Brain microvascular endothelial cell (primary cell): ENCODE measurements at regions of chr1 and their contacts with region 1.

Region 1: GRCh38 chr1:109655601-109656519 is at the start of gene GSTM4:
- DNase-seq: peak; percentile 67
- H3K4me3 ChIP-seq: peak within 1 kb of the TSS; percentile 76
- H3K27ac ChIP-seq: no peak within 1 kb of the TSS
- H3K27me3 ChIP-seq: no peaks in the 10 kb centered on the region
- CTCF ChIP-seq: peak; percentile 29

Region 2: DNA sequence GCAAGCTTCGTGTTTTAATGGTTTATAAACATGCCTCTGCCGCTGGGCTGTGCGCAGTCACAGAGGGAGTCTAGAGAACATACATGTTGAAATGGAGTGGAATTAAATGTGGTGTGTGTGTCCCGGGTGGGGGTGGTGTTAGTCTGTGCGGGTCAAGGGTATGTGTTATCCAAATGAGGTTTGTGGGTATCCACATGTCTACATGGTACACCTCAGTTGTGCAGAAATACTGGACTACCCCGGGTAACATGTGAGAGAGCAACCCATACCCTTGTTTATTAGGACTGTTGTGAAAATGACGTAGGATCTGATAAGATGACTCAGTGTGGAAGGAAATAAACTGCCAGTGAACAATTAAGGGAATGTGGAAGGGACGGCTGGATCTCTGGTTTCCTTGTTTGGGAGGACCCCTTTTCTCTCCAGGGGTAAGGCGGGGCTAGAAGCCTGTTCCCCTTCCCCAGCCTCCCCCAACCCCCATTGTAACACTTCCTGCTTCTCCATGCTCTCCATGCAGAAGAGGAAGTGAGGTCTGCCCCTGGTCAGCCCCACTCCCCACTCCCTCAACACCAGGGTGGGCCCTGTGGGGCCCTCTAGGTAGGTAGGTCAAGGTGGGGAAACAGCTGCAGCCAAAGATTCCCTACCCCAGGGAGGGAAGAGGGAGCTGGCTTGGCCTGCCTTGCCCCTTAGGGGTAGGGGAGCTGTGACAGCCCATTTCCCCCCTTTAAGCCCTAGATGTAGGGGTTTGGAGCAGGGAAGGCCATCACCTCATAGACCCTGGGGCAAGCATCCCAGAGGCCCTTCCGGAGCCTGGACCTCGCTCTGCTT is 107.2 kb after region 1 on chr1:
- in situ Hi-C with region 1: loop called (anchors 10 kb)
- DNase-seq: peak; percentile 25
- H3K4me3 ChIP-seq: no peak overlapping the region
- H3K27ac ChIP-seq: no peak overlapping the region
- H3K27me3 ChIP-seq: no peaks in the 10 kb centered on the region
- CTCF ChIP-seq: no peak